Esophagus squamous epithelium (tissue), 5 donors: ENCODE measurements at regions of chr2 and their contacts with region 1.

Region 1: GRCh38 chr2:85420536-85421259 is 2.2 kb downstream of the SH2D6 start:
- DNase-seq: peak; percentile 38
- H3K4me3 ChIP-seq: peak overlapping the region in 2 of 4 donors; percentile 19 to 49
- H3K27ac ChIP-seq: peak overlapping the region; percentile 96 to 99 (median 97)
- H3K4me1 ChIP-seq: peaks cover 30 to 45% (median 33%) of the 10 kb centered on the region in 3 donors
- H3K27me3 ChIP-seq: no peaks in the 10 kb centered on the region
- CTCF ChIP-seq: peak; percentile 99 to 100 (median 100)
- POLR2A ChIP-seq: no peak

Region 2: DNA sequence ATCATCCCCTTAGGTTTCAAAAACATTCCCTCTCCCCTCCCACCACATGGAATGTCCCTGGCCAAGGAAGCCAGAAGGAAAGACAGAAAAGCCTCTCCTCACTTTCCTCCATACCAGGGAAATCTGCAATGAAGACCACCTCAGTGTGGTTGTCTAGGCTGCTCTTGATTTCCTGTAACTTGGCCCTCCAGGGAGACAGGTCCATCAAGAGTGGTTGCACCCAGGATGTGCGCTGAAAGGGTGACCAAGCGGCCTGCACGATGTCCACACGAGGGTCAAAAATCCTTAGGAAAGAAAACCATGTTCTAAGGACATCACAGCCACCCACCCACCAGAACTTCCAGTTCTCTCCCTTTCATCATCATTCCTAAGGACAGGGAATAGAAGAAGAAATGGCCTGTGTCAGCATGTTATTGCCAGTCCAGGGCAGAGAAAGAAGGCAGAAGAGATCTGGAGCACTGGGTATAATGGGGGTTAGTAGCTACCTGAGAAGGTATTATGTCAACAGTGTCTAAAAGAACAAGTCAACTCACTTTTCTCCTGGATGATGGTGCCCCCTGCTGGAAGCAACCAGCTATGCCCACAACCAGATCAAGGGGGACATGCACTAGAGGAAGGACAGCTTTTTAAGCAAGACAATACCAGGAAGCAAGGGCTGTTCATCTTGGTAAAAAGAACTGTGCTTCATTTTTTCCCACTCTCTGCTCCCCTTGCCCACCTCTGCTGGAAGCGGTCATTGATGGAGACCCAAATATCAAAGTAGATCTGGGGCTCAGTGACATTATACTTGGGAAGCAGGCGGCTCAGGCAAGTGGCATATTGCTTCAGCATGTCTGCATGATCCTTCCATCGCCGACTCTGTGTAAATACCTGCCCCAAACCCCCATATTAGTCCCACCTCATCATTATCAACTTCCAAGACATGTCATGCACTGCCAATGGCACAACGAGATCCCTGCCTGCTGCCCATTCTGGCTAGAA is 131.3 kb after region 1 on chr2:
- intact Hi-C with region 1: loop called (anchors 2 kb)
- DNase-seq: no peak
- H3K4me3 ChIP-seq: no peak overlapping the region
- H3K27ac ChIP-seq: peak overlapping the region in 3 of 4 donors; percentile 8 to 26 (median 22)
- H3K4me1 ChIP-seq: peaks cover 0 to 15% (median 0%) of the 10 kb centered on the region in 3 donors
- H3K27me3 ChIP-seq: no peaks in the 10 kb centered on the region
- CTCF ChIP-seq: peak; percentile 87 to 96 (median 94)
- POLR2A ChIP-seq: no peak